Activated naive CD8-positive, alpha-beta T cell treated with anti-CD3 and anti-CD28 coated beads, Interleukin-2, amount 10 ng/mL, durations not matched to agents 7 days and 5 days (primary cell): ENCODE measurements at regions of chr11 and their contacts with region 1.

Region 1: DNA sequence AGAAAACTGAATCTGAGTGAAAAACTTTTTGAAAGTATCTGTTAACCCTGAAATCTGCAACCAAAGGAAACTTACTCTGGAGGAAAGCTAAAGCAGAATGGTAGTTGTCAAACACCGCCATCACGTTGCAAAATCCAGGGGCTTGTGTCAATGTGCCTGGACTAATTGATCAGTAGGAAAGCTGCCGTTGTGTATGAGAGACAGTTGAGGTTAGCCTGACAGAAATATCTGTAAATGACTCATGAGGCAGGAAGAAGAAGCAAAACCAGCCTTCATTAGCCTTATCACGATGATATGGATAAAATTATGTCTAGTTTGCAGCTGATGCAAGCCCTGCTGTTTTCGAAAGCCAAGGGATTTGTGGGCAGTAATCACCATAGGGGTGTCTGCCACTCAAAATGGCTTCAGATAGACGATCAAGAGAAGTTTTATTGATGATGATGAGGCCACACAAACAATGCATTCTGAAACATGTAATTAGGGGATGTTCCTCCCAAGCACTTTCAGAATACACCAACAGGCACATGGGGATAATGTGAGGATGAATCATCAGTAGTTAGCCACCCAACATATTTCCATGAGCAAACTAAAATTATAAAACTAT is 8.9 kb downstream of the SCGB1A1 start:
- DNase-seq: no peak
- ATAC-seq: peak; percentile 28
- H3K4me3 Mint-ChIP-seq: peak overlapping the region; percentile 29
- H3K27ac Mint-ChIP-seq: peak overlapping the region; percentile 90
- H3K4me1 Mint-ChIP-seq: peaks cover 38% of the 10 kb centered on the region
- H3K27me3 Mint-ChIP-seq: peaks cover 11% of the 10 kb centered on the region

Region 2: GRCh38 chr11:62542750-62543567 is 115.2 kb after region 1 on chr11:
- POLR2A ChIA-PET with region 1: interaction called, 14 read pairs
- DNase-seq: peak; percentile 88
- ATAC-seq: peak; percentile 43
- H3K4me3 Mint-ChIP-seq: peak overlapping the region; percentile 73
- H3K27ac Mint-ChIP-seq: peak overlapping the region; percentile 83
- H3K4me1 Mint-ChIP-seq: peaks cover 52% of the 10 kb centered on the region
- H3K27me3 Mint-ChIP-seq: peaks cover 9% of the 10 kb centered on the region